PC-9 (cell line): ENCODE measurements at regions of chr4 and their contacts with region 1.

Region 1: GRCh38 chr4:36198068-36198808 is 46.1 kb downstream of the ARAP2 start:
- DNase-seq: no peak
- H3K4me3 ChIP-seq: no peak overlapping the region
- H3K27ac ChIP-seq: no peak overlapping the region
- H3K4me1 ChIP-seq: no peaks in the 10 kb centered on the region
- H3K27me3 ChIP-seq: no peaks in the 10 kb centered on the region
- CTCF ChIP-seq: no peak

Region 2: DNA sequence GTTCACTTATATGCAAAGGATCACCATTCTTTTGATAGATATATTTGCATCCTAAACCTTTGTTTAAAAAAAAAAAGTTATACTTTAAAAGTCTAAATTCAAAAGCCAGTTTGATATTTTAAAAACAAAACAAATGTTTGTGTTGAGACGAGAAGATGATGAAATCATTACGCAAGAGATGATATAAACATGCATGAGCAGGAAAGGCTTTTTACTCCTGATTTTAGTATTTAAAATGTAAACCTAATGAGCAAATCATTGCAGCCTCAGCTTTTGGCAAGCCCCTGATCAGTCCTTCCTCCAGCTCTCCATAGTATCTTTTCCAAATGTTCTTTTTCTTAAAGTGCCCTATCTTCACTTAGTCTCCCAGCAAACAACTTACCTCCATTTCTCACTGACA is 69.5 kb before region 1 on chr4:
- CTCF ChIA-PET with region 1: no interaction called
- POLR2A ChIA-PET with region 1: interaction called, 11 read pairs
- intact Hi-C with region 1: no loop called
- DNase-seq: no peak
- H3K4me3 ChIP-seq: no peak overlapping the region
- H3K27ac ChIP-seq: no peak overlapping the region
- H3K4me1 ChIP-seq: no peaks in the 10 kb centered on the region
- H3K27me3 ChIP-seq: no peaks in the 10 kb centered on the region
- CTCF ChIP-seq: no peak